A549 (cell line): ENCODE measurements at regions of chr5 and their contacts with region 1.

Region 1: GRCh38 chr5:27217977-27218376 is 179.6 kb upstream of the CDH9 start:
- DNase-seq: no peak
- ATAC-seq: peak; percentile 54 to 62; a peak in 4 of 6 replicates
- H3K4me3 ChIP-seq: peak overlapping the region; percentile 36; the same call in 2 of the 3 replicates
- H3K27ac ChIP-seq: peak overlapping the region in 1 of 2 experiments; percentile 74; a peak in 3 of 6 replicates
- H3K4me1 ChIP-seq: no peaks in the 10 kb centered on the region
- CTCF ChIP-seq: no peak
- EP300 ChIP-seq: no peak
- POLR2A ChIP-seq: no peak
- RAD21 ChIP-seq: no peak

Region 2: DNA sequence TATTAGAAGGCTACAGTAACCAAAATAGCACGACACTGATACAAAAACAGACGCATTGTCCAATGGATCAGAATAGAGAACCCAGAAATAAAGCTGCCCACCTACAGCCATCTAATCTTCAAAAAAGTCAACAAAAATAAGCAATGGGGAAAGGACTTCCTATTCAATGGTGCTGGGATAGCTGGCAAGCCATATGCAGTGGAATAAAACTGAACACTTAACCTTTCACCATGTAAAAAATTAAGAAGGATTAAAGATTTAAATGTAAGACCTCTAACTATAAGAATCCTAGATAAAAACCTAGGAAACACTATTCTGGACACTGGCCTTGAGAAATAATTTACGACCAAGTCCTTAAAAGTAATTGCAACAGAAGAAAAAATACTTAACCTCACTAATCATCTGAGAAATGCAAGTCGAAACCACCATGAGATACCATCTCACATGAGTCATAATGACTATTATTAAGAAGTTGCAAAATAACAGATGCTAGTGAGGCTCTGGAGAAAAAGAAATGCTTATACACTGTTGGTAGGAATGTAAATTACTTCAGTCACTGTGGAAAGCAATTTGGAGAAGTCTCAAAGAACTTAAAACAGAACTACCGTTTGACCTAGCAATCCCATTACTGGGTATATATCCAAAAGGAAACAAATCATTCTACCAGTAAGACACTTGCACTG is 23.7 kb after region 1 on chr5:
- CTCF ChIA-PET with region 1: no interaction called
- POLR2A ChIA-PET with region 1: no interaction called
- DNase-seq: peak in 1 of 2 experiments; percentile 59
- ATAC-seq: peak; percentile 74 to 82
- H3K4me3 ChIP-seq: no peak overlapping the region
- H3K27ac ChIP-seq: peak overlapping the region; percentile 52 to 75; a peak in 5 of 6 replicates
- H3K4me1 ChIP-seq: peaks cover 11% of the 10 kb centered on the region
- CTCF ChIP-seq: no peak
- EP300 ChIP-seq: peak; percentile 38 to 49; a peak in 1 of 5 replicates
- POLR2A ChIP-seq: no peak
- RAD21 ChIP-seq: peak in 1 of 2 experiments; percentile 36; a peak in 1 of 5 replicates

Region 3: DNA sequence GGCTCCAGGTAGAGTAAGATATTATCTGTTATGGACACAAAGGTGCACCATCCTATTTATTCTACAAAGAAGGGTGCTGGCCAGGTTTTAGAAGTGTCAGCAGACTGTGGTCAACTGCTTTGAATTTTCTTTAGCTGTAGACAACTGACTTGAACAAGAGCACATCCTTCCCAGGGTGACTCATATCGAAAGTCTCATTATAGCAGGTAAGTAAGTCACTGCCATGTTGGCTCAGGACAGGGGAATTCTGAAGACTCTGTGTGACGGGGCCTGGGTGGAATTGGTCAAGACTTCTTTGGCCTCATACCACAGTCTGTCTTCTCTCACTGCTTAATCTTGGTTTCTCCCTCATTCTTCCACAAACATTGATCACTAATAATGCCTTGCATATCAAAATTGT is 34.9 kb after region 1 on chr5:
- CTCF ChIA-PET with region 1: no interaction called
- POLR2A ChIA-PET with region 1: interaction called, 11 read pairs
- DNase-seq: no peak
- ATAC-seq: no peak
- H3K4me3 ChIP-seq: no peak overlapping the region
- H3K27ac ChIP-seq: no peak overlapping the region
- H3K4me1 ChIP-seq: no peaks in the 10 kb centered on the region
- CTCF ChIP-seq: no peak
- EP300 ChIP-seq: no peak
- POLR2A ChIP-seq: no peak
- RAD21 ChIP-seq: no peak